Heart right ventricle (tissue), 16 donors: ENCODE measurements at regions of chr12 and their contacts with region 1.

Region 1: GRCh38 chr12:55681142-55682077 is 26.3 kb downstream of the ITGA7 start:
- DNase-seq: peak; percentile 65 to 67
- ATAC-seq: peak; percentile 74 to 88 (median 80)
- H3K4me3 ChIP-seq: peak overlapping the region; percentile 14 to 52 (median 39)
- H3K27ac ChIP-seq: peak overlapping the region; percentile 0 to 79 (median 55)
- H3K4me1 ChIP-seq: peaks cover 0 to 27% (median 14%) of the 10 kb centered on the region in 9 donors
- H3K27me3 ChIP-seq: no peaks in the 10 kb centered on the region
- CTCF ChIP-seq: peak in 8 of 9 donors; percentile 2 to 46 (median 32)

Region 2: GRCh38 chr12:55707841-55708694 is 26.7 kb after region 1 on chr12 and contains the start of gene ITGA7:
- intact Hi-C with region 1: loop called in 1 of 10 experiments (anchors 2 kb)
- DNase-seq: peak; percentile 82 to 87
- ATAC-seq: peak; percentile 43 to 73 (median 56)
- H3K4me3 ChIP-seq: peak within 1 kb of the TSS; percentile 41 to 87 (median 72)
- H3K27ac ChIP-seq: peak within 1 kb of the TSS; percentile 69 to 98 (median 89)
- H3K4me1 ChIP-seq: peaks cover 0 to 60% (median 37%) of the 10 kb centered on the region in 9 donors
- H3K27me3 ChIP-seq: peaks cover 0 to 20% (median 0%) of the 10 kb centered on the region in 7 donors
- CTCF ChIP-seq: no peak
- total RNA-seq, gene ITGA7: 422 to 750 (median 538) TPM

Region 3: DNA sequence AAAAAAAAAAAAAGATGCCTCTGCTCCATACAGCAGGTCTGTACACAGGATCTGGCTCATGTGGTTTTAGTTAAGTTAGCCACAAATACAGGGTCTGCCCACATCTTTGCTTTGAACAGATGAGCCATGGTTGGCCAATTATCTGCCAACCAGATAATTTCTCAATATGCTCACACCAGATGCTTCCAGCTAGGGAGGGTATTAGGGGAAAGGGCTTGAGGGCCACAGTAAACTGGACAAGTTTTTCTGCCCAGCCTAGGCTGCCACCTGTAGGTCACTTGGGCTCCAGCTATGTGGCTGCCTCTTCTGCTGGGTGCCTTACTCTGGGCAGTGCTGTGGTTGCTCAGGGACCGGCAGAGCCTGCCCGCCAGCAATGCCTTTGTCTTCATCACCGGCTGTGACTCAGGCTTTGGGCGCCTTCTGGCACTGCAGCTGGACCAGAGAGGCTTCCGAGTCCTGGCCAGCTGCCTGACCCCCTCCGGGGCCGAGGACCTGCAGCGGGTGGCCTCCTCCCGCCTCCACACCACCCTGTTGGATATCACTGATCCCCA is 39.6 kb after region 1 on chr12:
- intact Hi-C with region 1: loop called in 8 of 10 experiments (anchors 2 to 5 kb)
- DNase-seq: peak in 1 of 2 donors; percentile 64
- ATAC-seq: peak; percentile 44 to 77 (median 60)
- H3K4me3 ChIP-seq: peak overlapping the region in 2 of 10 donors; percentile 5 to 10
- H3K27ac ChIP-seq: peak overlapping the region in 9 of 10 donors; percentile 62 to 96 (median 92)
- H3K4me1 ChIP-seq: peaks cover 27 to 88% (median 80%) of the 10 kb centered on the region in 9 donors
- H3K27me3 ChIP-seq: no peaks in the 10 kb centered on the region
- CTCF ChIP-seq: peak; percentile 23 to 73 (median 59)

Region 4: GRCh38 chr12:55728939-55729823 is 47.8 kb after region 1 on chr12 and contains the start of gene CD63:
- intact Hi-C with region 1: loop called in 6 of 10 experiments (anchors 5 kb)
- DNase-seq: peak; percentile 91 to 94
- ATAC-seq: peak; percentile 86 to 93 (median 90)
- H3K4me3 ChIP-seq: peak within 1 kb of the TSS; percentile 66 to 98 (median 87)
- H3K27ac ChIP-seq: peak within 1 kb of the TSS; percentile 96 to 100 (median 99)
- H3K4me1 ChIP-seq: peaks cover 14 to 60% (median 51%) of the 10 kb centered on the region in 9 donors
- H3K27me3 ChIP-seq: no peaks in the 10 kb centered on the region
- CTCF ChIP-seq: no peak
- total RNA-seq, gene CD63: 565 to 1,547 (median 768) TPM